Activated CD4-positive, alpha-beta T cell treated with anti-CD3 and anti-CD28 coated beads, Interleukin-2, amount 10 ng/mL, durations not matched to agents 24 days and 14 days (primary cell): ENCODE measurements at regions of chr13 and their contacts with region 1.

Region 1: GRCh38 chr13:41960639-41961465 is at the start of gene VWA8:
- DNase-seq: peak; percentile 95
- H3K4me3 Mint-ChIP-seq: peak within 1 kb of the TSS; percentile 95
- H3K27ac Mint-ChIP-seq: peak within 1 kb of the TSS; percentile 93
- H3K4me1 Mint-ChIP-seq: peaks cover 32% of the 10 kb centered on the region
- H3K27me3 Mint-ChIP-seq: no peaks in the 10 kb centered on the region
- total RNA-seq, gene VWA8: 28.4 TPM in 2 replicates

Region 2: GRCh38 chr13:41905600-41906254 is 55.1 kb before region 1 on chr13:
- intact Hi-C with region 1: loop called (anchors 1 kb)
- DNase-seq: no peak
- H3K4me3 Mint-ChIP-seq: no peak overlapping the region
- H3K27ac Mint-ChIP-seq: no peak overlapping the region
- H3K4me1 Mint-ChIP-seq: peaks cover 9% of the 10 kb centered on the region
- H3K27me3 Mint-ChIP-seq: no peaks in the 10 kb centered on the region

Region 3: GRCh38 chr13:41928323-41928722 is 32.5 kb before region 1 on chr13:
- intact Hi-C with region 1: loop called (anchors 2 kb)
- DNase-seq: no peak
- H3K4me3 Mint-ChIP-seq: peak overlapping the region; percentile 75
- H3K27ac Mint-ChIP-seq: peak overlapping the region; percentile 83
- H3K4me1 Mint-ChIP-seq: peaks cover 42% of the 10 kb centered on the region
- H3K27me3 Mint-ChIP-seq: no peaks in the 10 kb centered on the region

Region 4: DNA sequence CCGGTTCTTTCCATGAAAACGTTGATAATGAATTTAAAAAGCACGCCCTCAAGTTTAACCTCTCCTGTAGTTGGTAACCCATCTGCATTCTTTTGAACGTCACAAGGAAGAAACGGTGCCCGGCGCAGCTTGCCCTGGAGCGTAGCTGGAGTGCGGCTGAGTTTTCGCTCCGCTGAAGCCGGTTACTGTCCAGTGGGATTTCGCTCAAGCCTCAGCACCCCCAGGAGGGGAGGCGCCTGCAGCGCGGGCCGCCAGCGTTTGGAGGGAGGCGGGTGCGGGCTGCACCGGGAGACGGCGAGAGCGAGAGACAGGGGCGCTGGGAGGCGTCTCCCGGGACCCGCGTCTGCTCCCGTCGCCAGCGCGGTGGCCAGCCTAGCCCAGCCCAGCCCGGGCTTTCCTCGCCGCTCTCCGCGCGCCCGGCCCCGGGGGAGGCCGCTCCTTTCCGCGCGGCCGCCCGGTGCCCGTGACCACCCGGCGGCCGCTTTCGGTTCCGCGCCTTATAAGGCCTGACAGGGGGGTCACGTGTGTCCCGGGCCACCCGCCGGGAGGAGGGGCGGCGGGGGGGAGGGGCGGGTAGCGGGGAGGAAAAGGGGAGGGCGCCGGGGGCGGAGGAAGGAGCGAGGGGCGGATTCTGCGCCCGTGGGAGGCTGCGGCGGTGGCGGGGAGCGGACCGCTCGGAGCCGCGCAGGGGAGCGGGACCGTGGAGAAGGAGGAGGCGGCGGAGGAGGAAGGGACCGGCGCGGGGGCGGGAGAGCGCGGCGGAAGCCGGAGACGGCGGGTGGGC is 79.3 kb after region 1 on chr13:
- intact Hi-C with region 1: loop called (anchors 2 kb)
- DNase-seq: peak; percentile 95
- H3K4me3 Mint-ChIP-seq: peak overlapping the region; percentile 84
- H3K27ac Mint-ChIP-seq: peak overlapping the region; percentile 83
- H3K4me1 Mint-ChIP-seq: peaks cover 19% of the 10 kb centered on the region
- H3K27me3 Mint-ChIP-seq: peaks cover 31% of the 10 kb centered on the region

Region 5: DNA sequence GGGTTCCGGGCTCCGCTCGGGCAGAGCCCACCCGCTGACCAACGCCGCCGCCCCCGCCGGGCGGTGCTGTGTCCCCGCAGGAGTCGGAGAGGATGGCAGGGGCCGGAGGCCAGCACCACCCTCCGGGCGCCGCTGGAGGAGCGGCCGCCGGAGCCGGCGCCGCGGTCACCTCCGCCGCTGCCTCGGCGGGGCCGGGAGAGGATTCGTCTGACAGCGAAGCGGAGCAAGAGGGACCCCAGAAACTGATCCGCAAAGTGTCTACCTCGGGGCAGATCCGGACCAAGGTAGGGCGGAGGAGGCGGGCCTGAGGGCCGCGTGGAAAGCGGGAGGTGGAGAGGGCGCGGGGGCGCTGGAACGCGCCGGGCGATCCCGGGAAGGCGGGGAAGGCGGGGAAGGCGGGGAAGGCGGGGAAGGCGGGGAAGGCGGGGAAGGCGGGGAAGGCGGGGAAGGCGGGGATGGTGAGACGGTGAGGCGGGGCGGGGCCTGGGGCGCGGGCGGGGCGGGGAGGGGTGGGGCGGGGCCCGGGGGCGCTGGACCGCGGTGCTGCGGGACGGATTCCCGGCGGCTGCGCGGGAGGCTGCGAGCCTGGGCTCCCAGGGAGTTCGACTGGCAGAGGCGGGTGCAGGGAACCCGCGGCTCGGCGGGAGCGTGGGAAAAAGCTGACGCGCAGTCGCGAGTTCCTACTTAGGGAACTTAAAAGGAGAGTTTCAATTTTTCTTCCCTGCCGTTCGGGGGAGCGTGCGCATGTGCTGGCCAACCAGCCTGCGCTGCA is 88.0 kb after region 1 on chr13:
- intact Hi-C with region 1: loop called (anchors 2 kb)
- DNase-seq: peak; percentile 89
- H3K4me3 Mint-ChIP-seq: peak overlapping the region; percentile 90
- H3K27ac Mint-ChIP-seq: peak overlapping the region; percentile 79
- H3K4me1 Mint-ChIP-seq: peaks cover 20% of the 10 kb centered on the region
- H3K27me3 Mint-ChIP-seq: peaks cover 12% of the 10 kb centered on the region

Region 6: GRCh38 chr13:42110410-42111155 is 149.7 kb after region 1 on chr13:
- intact Hi-C with region 1: loop called (anchors 5 kb)
- DNase-seq: peak; percentile 87
- H3K4me3 Mint-ChIP-seq: no peak overlapping the region
- H3K27ac Mint-ChIP-seq: peak overlapping the region; percentile 51
- H3K4me1 Mint-ChIP-seq: peaks cover 11% of the 10 kb centered on the region
- H3K27me3 Mint-ChIP-seq: no peaks in the 10 kb centered on the region

Region 7: DNA sequence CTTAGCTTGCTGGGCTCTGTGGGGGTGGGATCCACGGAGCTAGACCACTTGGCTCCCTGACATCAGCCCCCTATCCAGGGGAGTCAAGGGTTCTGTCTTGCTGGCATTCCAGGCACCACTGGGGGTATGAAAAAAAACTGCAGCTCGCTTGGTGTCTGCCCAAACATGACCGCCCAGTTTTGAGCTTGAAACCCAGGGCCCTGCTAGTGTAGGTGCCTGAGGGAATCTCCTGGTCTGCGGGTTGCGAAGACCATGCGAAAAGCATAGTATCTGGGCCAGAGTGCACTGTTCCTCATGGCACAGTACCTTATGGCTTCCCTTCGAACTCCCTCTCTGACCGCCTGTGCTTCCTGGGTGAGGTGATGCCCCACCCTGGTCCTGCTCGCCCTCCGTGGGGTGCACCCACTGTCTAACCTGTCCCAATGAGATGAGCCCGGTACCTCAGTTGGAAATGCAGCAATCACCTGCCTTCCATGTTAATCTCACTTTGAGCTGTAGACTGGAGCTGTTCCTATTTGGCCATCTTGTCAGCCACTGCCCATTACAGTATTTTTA is 492.3 kb after region 1 on chr13:
- intact Hi-C with region 1: no loop called
- DNase-seq: no peak
- H3K4me3 Mint-ChIP-seq: no peak overlapping the region
- H3K27ac Mint-ChIP-seq: no peak overlapping the region
- H3K4me1 Mint-ChIP-seq: peaks cover 16% of the 10 kb centered on the region
- H3K27me3 Mint-ChIP-seq: no peaks in the 10 kb centered on the region